Dorsolateral prefrontal cortex (tissue), 120 donors: ENCODE measurements at regions of chr21 and their contacts with region 1.

Region 1: GRCh38 chr21:16330082-16330907 is 600.5 kb downstream of the USP25 start:
- DNase-seq: peak in 2 of 10 donors; percentile 29 to 31
- H3K4me3 ChIP-seq: peak overlapping the region in 44 of 59 donors; percentile 0 to 47 (median 23)
- H3K27ac ChIP-seq: peak overlapping the region in 37 of 59 donors; percentile 1 to 71 (median 28)
- H3K27me3 ChIP-seq: no peaks in the 10 kb centered on the region
- CTCF ChIP-seq: peak; percentile 70 to 95 (median 85)

Region 2: GRCh38 chr21:16002874-16003466 is 327.3 kb before region 1 on chr21:
- intact Hi-C with region 1: loop called in 1 of 2 experiments (anchors 10 kb)
- DNase-seq: no peak
- H3K4me3 ChIP-seq: no peak overlapping the region
- H3K27ac ChIP-seq: no peak overlapping the region
- H3K27me3 ChIP-seq: no peaks in the 10 kb centered on the region
- CTCF ChIP-seq: peak in 55 of 56 donors; percentile 40 to 80 (median 64)

Region 3: GRCh38 chr21:16082038-16082816 is 248.1 kb before region 1 on chr21:
- intact Hi-C with region 1: loop called (anchors 5 kb)
- DNase-seq: no peak
- H3K4me3 ChIP-seq: peak overlapping the region in 56 of 59 donors; percentile 0 to 60 (median 38)
- H3K27ac ChIP-seq: peak overlapping the region; percentile 49 to 99 (median 97)
- H3K27me3 ChIP-seq: no peaks in the 10 kb centered on the region
- CTCF ChIP-seq: peak; percentile 42 to 90 (median 67)

Region 4: GRCh38 chr21:16186742-16187141 is 143.6 kb before region 1 on chr21:
- intact Hi-C with region 1: no loop called
- DNase-seq: no peak
- H3K4me3 ChIP-seq: no peak overlapping the region
- H3K27ac ChIP-seq: peak overlapping the region in 47 of 59 donors; percentile 6 to 79 (median 64)
- H3K27me3 ChIP-seq: no peaks in the 10 kb centered on the region
- CTCF ChIP-seq: no peak

Region 5: DNA sequence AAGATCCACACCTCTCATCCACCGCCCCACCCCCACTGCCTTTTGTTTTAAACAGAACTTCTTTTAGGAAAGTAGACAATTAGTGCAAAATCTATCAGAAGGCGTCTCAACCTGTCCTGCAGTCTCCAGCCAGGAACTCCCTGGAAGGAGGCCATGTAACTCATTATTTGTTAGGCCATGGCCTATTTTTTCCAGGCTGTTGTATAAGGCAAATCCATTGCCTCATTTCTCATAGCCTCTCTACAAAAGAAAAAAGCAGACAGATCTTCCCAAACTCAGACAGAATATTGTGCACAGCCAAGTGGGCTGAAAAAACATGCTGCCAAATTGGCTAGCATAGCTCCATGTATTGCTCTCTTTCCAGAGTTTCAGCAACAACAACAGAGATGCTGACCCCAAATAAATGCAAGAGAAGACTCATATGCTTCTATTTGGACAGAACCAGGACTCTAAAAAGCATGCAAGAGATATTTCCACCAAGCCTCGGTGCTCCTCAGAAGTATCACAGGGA is 411.9 kb after region 1 on chr21:
- intact Hi-C with region 1: no loop called
- DNase-seq: peak in 1 of 10 donors; percentile 50
- H3K4me3 ChIP-seq: no peak overlapping the region
- H3K27ac ChIP-seq: peak overlapping the region in 7 of 59 donors; percentile 16 to 44 (median 24)
- H3K27me3 ChIP-seq: no peaks in the 10 kb centered on the region
- CTCF ChIP-seq: no peak